Vagina (tissue), 2 donors: ENCODE measurements at regions of chr14 and their contacts with region 1.

Region 1: GRCh38 chr14:28756884-28757570 is 9.6 kb upstream of the FOXG1 start:
- DNase-seq: no peak
- H3K4me3 ChIP-seq: no peak overlapping the region
- H3K27ac ChIP-seq: no peak overlapping the region
- H3K4me1 ChIP-seq: peaks cover 10% of the 10 kb centered on the region
- H3K27me3 ChIP-seq: peaks cover 7% of the 10 kb centered on the region
- CTCF ChIP-seq: no peak
- POLR2A ChIP-seq: no peak

Region 2: DNA sequence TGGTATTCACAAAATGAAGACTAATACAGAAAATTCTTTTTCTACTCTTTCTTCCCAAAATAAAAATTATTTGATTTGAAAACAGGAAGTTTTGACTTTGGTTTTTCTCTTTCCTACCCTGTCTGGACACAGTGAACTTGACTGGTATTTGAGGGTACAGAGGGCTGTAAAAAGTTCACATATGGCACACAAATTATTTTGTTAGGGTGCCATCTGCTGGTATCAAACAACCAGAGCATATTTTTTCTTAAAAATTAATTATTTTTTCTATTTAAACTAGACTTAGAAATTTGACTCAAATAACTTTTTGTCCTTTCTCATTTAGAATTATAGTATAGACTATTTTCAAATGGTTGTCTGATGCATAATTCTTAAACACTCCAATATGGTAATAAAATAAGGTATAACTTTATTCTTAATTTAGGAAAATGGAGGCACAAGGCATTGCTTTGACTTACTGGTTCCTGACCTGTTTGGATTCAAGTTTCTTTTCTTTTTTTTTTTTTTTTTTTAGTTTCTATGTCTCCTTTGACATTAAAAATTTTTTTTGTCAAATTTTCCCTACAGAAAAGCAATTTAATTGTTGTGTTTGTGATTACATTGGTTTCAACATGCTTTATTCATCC is 780.0 kb after region 1 on chr14:
- intact Hi-C with region 1: loop called (anchors 5 kb)
- DNase-seq: no peak
- H3K4me3 ChIP-seq: no peak overlapping the region
- H3K27ac ChIP-seq: no peak overlapping the region
- H3K4me1 ChIP-seq: no peaks in the 10 kb centered on the region
- H3K27me3 ChIP-seq: no peaks in the 10 kb centered on the region
- CTCF ChIP-seq: no peak
- POLR2A ChIP-seq: no peak